Breast epithelium (tissue), 4 donors: ENCODE measurements at regions of chr3 and their contacts with region 1.

Region 1: GRCh38 chr3:48478596-48479555 is 25.1 kb downstream of the SHISA5 start:
- DNase-seq: no peak
- H3K4me3 ChIP-seq: no peak overlapping the region
- H3K27ac ChIP-seq: peak overlapping the region in 1 of 2 donors; percentile 23
- H3K4me1 ChIP-seq: no peaks in the 10 kb centered on the region
- H3K27me3 ChIP-seq: no peaks in the 10 kb centered on the region
- CTCF ChIP-seq: no peak
- POLR2A ChIP-seq: no peak

Region 2: DNA sequence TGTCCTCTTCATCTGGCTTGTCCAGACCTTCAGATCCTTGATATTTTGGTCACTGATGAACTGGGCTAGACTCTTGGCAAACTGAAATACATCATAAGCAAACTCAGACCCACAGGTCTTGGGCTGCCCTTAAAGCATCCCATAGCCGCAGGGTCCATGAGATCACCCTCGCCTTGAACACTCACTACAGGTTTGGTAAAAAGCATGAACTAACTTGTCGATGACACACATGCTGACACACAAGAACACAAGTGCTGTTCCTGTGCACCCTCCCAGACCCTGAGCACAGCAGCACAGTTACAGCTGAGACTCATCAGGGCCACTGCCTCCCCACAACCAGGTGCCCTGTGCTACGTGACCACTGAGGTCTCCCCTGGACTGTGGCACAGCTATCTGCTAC is 56.7 kb after region 1 on chr3:
- intact Hi-C with region 1: loop called (anchors 5 kb)
- DNase-seq: no peak
- H3K4me3 ChIP-seq: no peak overlapping the region
- H3K27ac ChIP-seq: no peak overlapping the region
- H3K4me1 ChIP-seq: no peaks in the 10 kb centered on the region
- H3K27me3 ChIP-seq: no peaks in the 10 kb centered on the region
- CTCF ChIP-seq: no peak
- POLR2A ChIP-seq: no peak